ENCODE measurements at regions of chr21 and their contacts with region 1.

Region 1: GRCh38 chr21:32940079-32941014 is 85.4 kb upstream of the OLIG2 start:
- DNase-seq: peak; percentile 45
- ATAC-seq: peak; percentile 23
- H3K4me3 Mint-ChIP-seq: no peak overlapping the region
- H3K27ac Mint-ChIP-seq: no peak overlapping the region
- H3K4me1 Mint-ChIP-seq: peaks cover 5% of the 10 kb centered on the region
- H3K27me3 Mint-ChIP-seq: peaks cover 39% of the 10 kb centered on the region

Region 2: GRCh38 chr21:32717851-32718316 is 222.5 kb before region 1 on chr21:
- CTCF ChIA-PET with region 1: no interaction called
- DNase-seq: no peak
- ATAC-seq: no peak
- H3K4me3 Mint-ChIP-seq: no peak overlapping the region
- H3K27ac Mint-ChIP-seq: no peak overlapping the region
- H3K4me1 Mint-ChIP-seq: no peaks in the 10 kb centered on the region
- H3K27me3 Mint-ChIP-seq: no peaks in the 10 kb centered on the region

Region 3: DNA sequence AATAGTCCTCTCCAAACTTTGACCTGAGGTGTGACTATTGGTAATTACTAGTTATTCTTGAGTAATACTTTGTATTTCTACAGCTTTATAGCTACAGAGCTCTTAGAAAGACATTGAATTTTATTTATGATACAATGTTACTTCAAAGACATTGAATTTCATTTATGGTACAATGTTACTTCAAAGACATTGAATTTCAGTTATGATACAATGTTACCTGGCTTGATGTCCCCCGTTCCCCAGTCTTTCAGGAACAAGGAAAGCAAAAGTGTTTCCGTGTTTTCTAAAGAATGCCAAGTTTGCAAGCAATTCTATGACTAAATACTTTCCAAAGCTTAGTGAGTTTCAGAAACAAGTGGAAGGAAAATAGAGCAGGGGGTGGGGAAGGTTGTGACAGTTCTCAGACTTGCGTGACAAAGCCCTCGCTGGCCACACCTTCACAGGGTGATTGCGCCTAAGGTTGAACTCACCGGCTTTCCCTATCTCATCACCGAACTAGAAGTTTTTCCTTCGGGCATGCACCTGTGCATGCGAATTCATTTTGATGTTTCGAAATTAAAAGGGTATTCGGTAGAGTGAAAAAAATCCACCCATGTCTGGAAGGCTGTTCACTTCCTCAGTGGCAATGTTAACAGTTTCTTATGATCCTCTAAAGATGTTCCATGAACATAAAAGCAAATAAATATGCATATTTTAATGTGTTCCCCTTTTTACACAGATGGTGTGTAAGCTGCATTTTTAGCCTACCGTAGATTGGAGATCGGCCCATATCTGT is 167.9 kb before region 1 on chr21:
- CTCF ChIA-PET with region 1: no interaction called
- DNase-seq: peak; percentile 75
- ATAC-seq: peak; percentile 13
- H3K4me3 Mint-ChIP-seq: peak overlapping the region; percentile 92
- H3K27ac Mint-ChIP-seq: peak overlapping the region; percentile 98
- H3K4me1 Mint-ChIP-seq: peaks cover 42% of the 10 kb centered on the region
- H3K27me3 Mint-ChIP-seq: peaks cover 3% of the 10 kb centered on the region

Region 4: GRCh38 chr21:32929633-32930038 is 10.7 kb before region 1 on chr21:
- CTCF ChIA-PET with region 1: interaction called, 24 read pairs
- DNase-seq: peak; percentile 41
- ATAC-seq: peak; percentile 25
- H3K4me3 Mint-ChIP-seq: no peak overlapping the region
- H3K27ac Mint-ChIP-seq: peak overlapping the region; percentile 61
- H3K4me1 Mint-ChIP-seq: peaks cover 35% of the 10 kb centered on the region
- H3K27me3 Mint-ChIP-seq: peaks cover 44% of the 10 kb centered on the region

Region 5: DNA sequence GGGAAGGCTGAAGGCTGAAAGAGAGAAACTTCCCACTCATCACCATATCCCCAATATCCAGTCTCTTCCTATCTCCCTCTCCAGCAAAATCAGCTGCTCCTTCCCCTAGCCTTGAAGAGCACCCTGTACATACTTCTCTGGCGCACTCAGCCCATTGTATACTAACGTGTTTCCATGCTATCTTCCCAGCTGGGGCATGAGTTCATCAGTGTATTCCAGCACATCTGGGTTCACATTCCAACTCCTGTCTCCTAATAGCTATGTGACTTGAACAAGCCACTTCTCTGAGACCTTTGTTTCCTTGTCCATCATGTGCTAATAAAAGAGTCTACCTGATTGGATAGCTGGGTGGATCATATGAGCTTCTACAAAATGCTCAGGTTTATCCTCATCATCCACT is 34.3 kb after region 1 on chr21:
- CTCF ChIA-PET with region 1: interaction called, 11 read pairs
- DNase-seq: no peak
- ATAC-seq: no peak
- H3K4me3 Mint-ChIP-seq: no peak overlapping the region
- H3K27ac Mint-ChIP-seq: no peak overlapping the region
- H3K4me1 Mint-ChIP-seq: no peaks in the 10 kb centered on the region
- H3K27me3 Mint-ChIP-seq: peaks cover 21% of the 10 kb centered on the region

Region 6: GRCh38 chr21:33069976-33070811 is 129.8 kb after region 1 on chr21 and contains the start of gene OLIG1:
- CTCF ChIA-PET with region 1: no interaction called
- DNase-seq: no peak
- ATAC-seq: peak; percentile 52
- H3K4me3 Mint-ChIP-seq: peak within 1 kb of the TSS; percentile 65
- H3K27ac Mint-ChIP-seq: no peak within 1 kb of the TSS
- H3K4me1 Mint-ChIP-seq: peaks cover 19% of the 10 kb centered on the region
- H3K27me3 Mint-ChIP-seq: peaks cover 82% of the 10 kb centered on the region
- total RNA-seq, gene OLIG1: not detected

Region 7: DNA sequence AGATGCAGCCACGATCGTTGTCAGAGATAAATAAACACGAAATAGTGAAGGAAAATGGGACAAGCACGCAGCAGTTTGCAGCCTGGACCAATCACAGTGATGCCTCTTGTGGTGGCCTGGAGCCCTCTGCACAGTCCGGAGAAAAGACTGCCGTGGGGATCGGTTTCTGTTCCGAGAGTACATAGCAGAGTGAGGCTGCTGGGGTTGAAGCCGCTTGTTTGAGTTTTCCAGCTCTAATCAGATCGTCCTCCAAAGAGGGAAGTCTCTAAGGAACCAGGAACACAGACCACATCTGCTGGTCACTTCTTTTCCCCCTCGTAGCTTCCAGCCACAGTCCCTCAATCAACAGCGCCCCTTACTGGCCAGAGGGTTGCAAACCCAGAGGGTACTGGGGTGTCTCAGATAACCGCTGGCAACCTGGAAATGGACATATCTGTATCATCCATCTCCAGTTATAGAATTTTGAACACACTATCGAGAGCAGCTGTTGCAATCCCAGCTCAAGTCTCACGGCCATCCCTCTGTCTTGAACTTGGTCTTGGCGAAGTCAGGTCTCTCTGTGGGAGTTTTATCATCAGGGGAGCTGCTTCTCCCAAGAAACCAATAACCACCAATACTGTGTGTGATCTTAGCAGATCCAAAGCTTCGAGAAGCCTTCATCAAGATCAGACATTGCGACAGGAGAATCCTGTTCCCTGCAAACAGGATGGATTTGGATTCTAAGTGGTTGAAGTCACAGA is 187.0 kb after region 1 on chr21:
- CTCF ChIA-PET with region 1: interaction called, 12 read pairs
- DNase-seq: peak; percentile 76
- ATAC-seq: peak; percentile 76
- H3K4me3 Mint-ChIP-seq: peak overlapping the region; percentile 53
- H3K27ac Mint-ChIP-seq: no peak overlapping the region
- H3K4me1 Mint-ChIP-seq: no peaks in the 10 kb centered on the region
- H3K27me3 Mint-ChIP-seq: peaks cover 34% of the 10 kb centered on the region

Region 8: DNA sequence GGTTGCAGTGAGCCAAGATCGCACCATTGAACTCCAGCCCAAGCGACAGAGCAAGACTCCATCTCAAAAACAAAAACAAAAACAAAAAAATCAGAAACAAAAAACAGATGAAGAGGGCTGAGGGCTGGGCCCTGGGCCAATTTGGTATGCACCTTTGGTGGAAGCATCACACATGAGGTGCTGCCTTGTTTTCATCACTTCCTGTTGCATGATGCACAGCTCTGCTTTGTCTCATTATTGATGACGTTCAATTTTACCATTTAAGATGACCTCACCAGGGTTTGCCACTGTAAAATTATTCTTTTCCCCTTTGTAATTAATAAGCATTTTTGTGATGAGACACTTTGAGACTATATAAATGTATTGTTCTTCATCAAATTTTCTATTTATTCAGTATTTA is 279.6 kb after region 1 on chr21:
- CTCF ChIA-PET with region 1: no interaction called
- DNase-seq: peak; percentile 41
- ATAC-seq: no peak
- H3K4me3 Mint-ChIP-seq: no peak overlapping the region
- H3K27ac Mint-ChIP-seq: no peak overlapping the region
- H3K4me1 Mint-ChIP-seq: peaks cover 24% of the 10 kb centered on the region
- H3K27me3 Mint-ChIP-seq: peaks cover 10% of the 10 kb centered on the region

Region 9: DNA sequence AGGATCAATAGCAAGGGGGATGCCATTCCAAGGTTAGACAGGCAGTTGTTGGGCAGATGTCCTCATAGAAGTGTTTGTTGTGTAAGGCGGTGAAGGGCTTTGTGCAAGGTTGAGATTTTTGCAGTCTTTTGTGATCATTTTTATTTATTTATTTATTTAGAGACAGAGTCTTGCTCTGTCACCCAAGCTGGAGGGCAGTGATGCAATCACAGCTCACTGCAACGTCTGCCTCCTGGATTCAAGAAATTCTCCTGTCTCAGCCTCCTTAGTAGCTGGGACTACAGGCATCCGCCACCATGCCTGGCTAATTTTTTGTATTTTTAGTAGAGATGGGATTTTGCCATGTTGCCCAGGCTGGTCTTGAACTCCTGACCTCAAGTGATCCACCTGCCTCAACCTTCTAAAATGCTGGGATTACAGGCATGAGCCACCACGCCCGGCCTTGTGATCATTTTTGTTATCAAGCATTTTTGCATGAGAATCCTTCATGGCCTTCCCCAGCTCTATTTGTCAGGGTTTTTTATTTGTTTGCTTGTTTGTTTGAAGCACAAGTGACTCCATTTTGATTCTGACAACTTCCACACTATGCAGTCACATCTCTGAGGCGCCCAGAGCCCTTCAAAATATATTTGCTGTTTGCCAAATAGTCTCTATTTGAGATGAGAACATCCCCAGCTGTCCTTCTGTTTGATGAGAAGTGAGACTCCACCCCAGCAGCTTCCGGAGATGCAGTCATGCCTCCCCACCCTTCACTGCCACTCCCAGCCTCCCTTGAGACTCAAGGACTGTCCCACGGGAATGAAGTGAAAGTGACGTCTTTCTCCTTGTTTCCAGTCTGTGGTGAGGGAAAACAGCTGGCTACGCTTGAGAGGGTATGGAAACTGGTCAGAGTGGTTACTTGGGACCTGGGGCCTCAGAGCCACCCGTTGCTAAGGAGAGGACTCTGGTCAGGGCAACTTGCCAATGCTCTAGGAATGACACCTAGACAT is 501.4 kb after region 1 on chr21:
- CTCF ChIA-PET with region 1: interaction called, 12 read pairs
- DNase-seq: no peak
- ATAC-seq: no peak
- H3K4me3 Mint-ChIP-seq: no peak overlapping the region
- H3K27ac Mint-ChIP-seq: no peak overlapping the region
- H3K4me1 Mint-ChIP-seq: peaks cover 3% of the 10 kb centered on the region
- H3K27me3 Mint-ChIP-seq: no peaks in the 10 kb centered on the region